ENCODE measurements at regions of chr18 and their contacts with region 1.

Region 1: DNA sequence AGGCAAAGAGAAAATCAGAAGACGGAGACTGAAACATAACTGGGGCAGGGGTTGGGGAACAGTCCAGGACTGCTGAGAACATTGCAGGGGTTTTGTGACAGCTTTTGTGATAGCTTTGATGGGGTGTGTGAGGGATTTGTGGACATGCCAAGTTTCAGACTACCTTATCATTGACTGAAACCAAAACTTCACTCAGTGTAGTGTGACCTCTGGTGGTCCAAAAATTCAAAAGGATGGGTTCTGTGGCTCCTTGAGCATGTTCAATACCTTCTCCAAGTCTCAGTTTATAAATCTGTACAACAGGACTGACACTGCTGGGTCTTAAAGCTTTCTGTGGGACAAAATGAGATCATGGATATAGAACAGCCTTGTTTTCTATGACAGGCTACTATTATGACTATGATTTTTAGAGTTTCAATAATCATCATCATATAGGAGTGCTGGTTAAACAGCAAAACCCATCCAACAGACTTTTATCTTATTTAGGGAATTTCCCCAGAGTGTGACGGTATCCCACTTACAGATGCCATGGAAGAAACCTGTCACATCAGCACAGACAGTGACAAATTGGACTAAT is 259.2 kb upstream of the SLC14A2 start:
- DNase-seq: no peak
- ATAC-seq: no peak
- H3K4me3 ChIP-seq: no peak overlapping the region
- H3K27ac ChIP-seq: no peak overlapping the region
- H3K4me1 ChIP-seq: peaks cover 51% of the 10 kb centered on the region
- H3K27me3 ChIP-seq: no peaks in the 10 kb centered on the region
- CTCF ChIP-seq: no peak

Region 2: DNA sequence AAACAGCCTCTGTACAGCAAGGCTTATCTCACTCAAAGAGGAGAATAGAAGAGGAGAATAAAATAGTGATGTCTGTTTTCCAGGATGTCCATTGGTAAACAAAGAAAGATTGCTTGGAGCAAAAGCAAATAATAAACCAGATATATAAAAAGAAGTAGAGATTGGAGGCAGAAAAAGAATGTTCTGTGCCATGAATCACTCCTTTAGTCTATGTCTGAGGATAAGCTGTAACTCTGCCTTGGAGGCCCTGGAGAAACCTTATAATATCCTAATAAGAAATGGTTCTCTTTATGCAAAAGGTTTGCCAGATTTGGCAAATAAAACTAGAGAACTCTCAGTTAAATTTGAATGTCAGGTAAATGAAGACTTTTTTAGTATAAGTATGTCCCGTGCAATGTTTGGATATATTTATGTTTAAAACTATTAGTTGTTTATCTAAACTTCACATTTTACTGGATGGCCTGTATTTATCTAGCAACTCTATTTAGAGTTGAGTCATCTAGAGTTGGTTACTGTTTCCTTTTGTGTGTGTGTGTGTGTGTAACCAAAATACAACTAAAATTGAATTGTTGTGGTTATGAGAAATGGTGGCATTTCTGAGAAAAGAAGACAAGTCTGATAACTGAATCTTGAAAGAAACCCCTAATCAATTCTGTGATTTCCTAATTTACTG is 1185.7 kb before region 1 on chr18:
- intact Hi-C with region 1: no loop called
- DNase-seq: no peak
- ATAC-seq: no peak
- H3K4me3 ChIP-seq: no peak overlapping the region
- H3K27ac ChIP-seq: no peak overlapping the region
- H3K4me1 ChIP-seq: no peaks in the 10 kb centered on the region
- H3K27me3 ChIP-seq: no peaks in the 10 kb centered on the region
- CTCF ChIP-seq: no peak

Region 3: GRCh38 chr18:44803019-44803650 is 552.9 kb before region 1 on chr18:
- intact Hi-C with region 1: loop called in 1 of 2 experiments (anchors 10 kb)
- DNase-seq: peak; percentile 62 to 79
- ATAC-seq: peak; percentile 96 to 98 (median 96)
- H3K4me3 ChIP-seq: peak overlapping the region; percentile 54
- H3K27ac ChIP-seq: peak overlapping the region; percentile 97
- H3K4me1 ChIP-seq: peaks cover 79% of the 10 kb centered on the region
- H3K27me3 ChIP-seq: no peaks in the 10 kb centered on the region
- CTCF ChIP-seq: no peak

Region 4: DNA sequence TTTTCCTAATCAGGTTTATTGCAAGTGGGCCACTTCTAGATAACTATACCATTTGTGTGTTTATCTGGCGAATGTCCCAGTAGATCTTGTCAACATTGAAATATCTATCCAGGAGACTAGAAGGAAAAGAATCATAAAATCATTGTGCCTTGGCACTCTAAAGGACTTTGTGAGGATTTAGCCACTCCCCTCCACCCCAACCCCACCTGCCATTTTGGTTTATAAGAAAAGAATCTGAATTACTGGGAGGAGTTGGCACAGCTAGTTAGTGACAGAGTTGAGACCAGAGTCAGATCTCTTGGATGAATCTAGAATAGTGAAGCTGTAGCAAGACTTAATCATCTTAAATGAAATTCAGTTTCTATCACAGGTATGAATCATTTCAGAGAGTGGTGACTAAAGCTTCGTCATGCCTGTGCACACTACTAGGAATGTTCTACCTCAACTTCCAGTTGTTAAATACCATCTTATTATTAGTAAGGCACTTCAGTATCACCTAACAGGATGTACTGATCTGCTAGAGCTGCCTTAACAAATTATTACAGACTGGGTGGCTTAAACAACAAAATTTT is 46.5 kb after region 1 on chr18:
- intact Hi-C with region 1: no loop called
- DNase-seq: no peak
- ATAC-seq: peak; percentile 36 to 89 (median 75)
- H3K4me3 ChIP-seq: no peak overlapping the region
- H3K27ac ChIP-seq: no peak overlapping the region
- H3K4me1 ChIP-seq: no peaks in the 10 kb centered on the region
- H3K27me3 ChIP-seq: no peaks in the 10 kb centered on the region
- CTCF ChIP-seq: no peak

Measured in psoas muscle (tissue), 8 donors.